Dorsolateral prefrontal cortex (tissue), 120 donors: ENCODE measurements at regions of chr2 and their contacts with region 1.

Region 1: DNA sequence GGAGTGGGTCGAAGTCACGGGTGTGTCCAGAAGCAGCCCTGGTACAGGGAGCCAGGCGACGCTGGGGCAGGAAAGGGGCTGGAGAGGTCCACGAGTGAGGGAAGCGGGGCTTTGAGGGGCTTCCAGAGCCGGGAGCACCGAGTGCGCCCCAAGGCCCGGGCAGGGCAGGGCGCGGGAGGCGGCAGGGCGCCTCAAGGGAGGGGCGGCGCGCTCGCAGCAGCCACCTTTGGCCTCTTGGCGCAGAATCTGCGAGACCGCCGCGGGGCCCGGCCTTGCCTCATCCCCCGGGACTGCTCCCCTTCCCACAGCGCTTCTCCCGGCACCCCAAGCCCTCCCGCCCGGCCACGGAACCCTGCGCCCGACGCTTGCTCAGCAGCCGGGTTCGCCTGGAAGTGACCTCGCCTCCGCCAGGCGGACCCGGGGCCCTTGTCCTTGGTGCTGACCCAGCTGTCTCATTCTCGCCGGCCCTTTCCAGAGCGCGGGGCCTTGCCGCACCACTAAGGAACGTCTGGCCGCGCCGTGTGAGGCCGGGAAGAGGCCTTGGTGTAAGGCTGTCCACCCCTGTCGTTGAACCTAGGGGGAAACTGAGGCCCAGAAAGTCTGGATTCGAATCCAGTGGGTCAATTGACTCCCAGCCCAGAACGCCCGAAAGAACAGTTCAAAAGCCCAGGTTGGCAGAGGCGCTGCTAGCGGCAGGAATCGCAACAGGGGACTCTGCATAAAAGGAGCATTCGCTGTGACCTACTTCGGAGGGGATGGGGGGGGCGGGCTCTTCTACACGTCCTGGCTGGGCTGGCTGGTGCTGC is 584 bp upstream of the DNER start:
- DNase-seq: peak; percentile 36 to 69 (median 52)
- H3K4me3 ChIP-seq: peak overlapping the region; percentile 56 to 92 (median 81)
- H3K27ac ChIP-seq: peak overlapping the region in 56 of 59 donors; percentile 29 to 92 (median 83)
- H3K27me3 ChIP-seq: peaks cover 0 to 21% (median 0%) of the 10 kb centered on the region in 45 donors
- CTCF ChIP-seq: peak in 18 of 56 donors; percentile 8 to 51 (median 21)

Region 2: DNA sequence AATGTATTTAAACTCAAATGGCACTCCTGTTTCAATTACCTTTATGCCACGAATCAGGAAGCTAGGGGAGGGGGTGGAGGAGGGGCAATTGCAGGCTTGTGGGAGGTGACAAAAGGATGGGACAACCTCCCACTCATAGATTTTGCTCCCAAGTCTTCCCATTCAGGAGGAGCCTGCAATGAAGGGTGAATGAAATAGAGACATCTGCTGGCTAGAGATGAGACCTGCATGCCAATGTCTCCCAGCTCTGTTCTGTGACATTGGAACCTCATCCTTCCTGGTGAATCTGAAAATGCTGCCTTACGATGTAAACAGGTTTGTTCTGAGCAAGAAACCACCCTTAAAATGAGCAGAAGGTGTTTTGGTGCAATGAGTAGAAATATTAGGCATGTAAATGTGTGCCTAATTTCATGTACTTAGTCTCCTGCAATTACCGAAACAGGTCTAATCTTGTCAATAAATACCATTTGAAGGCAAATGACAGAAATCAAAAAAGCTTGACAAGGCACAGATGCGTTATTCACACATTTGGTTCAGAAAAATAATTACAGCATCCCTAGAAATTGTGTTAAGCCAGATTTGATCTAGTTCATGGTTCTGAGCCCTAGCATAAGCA is 441.1 kb before region 1 on chr2:
- intact Hi-C with region 1: loop called (anchors 5 to 10 kb)
- DNase-seq: peak in 4 of 10 donors; percentile 25 to 59 (median 42)
- H3K4me3 ChIP-seq: peak overlapping the region; percentile 3 to 60 (median 40)
- H3K27ac ChIP-seq: peak overlapping the region in 3 of 59 donors; percentile 26 to 39 (median 33)
- H3K27me3 ChIP-seq: no peaks in the 10 kb centered on the region
- CTCF ChIP-seq: peak; percentile 55 to 90 (median 80)

Region 3: DNA sequence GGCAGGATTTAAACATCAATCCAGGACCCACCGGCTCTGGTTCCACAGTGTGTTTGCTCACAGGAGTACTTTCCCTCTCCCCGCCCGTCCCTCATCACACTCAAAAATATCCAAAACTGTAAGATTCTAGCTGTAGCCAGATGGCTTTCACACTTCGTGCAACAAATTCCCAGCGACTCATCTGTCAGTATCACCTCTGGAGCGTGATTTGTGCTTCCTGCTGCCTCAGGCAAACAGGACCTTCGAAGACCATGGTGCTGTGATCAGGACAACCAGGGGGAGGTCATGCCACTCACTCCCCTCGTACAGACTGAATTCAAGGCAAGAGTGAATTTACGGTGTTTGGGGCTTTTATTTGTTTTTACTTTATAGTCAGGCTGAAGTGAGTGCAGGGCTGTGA is 289.3 kb before region 1 on chr2:
- intact Hi-C with region 1: loop called (anchors 5 kb)
- DNase-seq: peak in 1 of 10 donors; percentile 28
- H3K4me3 ChIP-seq: no peak overlapping the region
- H3K27ac ChIP-seq: no peak overlapping the region
- H3K27me3 ChIP-seq: no peaks in the 10 kb centered on the region
- CTCF ChIP-seq: no peak

Region 4: GRCh38 chr2:229586746-229587705 is 127.9 kb before region 1 on chr2:
- intact Hi-C with region 1: loop called (anchors 2 kb)
- DNase-seq: peak; percentile 54 to 91 (median 88)
- H3K4me3 ChIP-seq: peak overlapping the region in 50 of 59 donors; percentile 4 to 59 (median 32)
- H3K27ac ChIP-seq: peak overlapping the region in 6 of 59 donors; percentile 7 to 61 (median 22)
- H3K27me3 ChIP-seq: no peaks in the 10 kb centered on the region
- CTCF ChIP-seq: peak; percentile 82 to 99 (median 94)